Natural killer cell (primary cell): ENCODE measurements at regions of chr6 and their contacts with region 1.

Region 1: DNA sequence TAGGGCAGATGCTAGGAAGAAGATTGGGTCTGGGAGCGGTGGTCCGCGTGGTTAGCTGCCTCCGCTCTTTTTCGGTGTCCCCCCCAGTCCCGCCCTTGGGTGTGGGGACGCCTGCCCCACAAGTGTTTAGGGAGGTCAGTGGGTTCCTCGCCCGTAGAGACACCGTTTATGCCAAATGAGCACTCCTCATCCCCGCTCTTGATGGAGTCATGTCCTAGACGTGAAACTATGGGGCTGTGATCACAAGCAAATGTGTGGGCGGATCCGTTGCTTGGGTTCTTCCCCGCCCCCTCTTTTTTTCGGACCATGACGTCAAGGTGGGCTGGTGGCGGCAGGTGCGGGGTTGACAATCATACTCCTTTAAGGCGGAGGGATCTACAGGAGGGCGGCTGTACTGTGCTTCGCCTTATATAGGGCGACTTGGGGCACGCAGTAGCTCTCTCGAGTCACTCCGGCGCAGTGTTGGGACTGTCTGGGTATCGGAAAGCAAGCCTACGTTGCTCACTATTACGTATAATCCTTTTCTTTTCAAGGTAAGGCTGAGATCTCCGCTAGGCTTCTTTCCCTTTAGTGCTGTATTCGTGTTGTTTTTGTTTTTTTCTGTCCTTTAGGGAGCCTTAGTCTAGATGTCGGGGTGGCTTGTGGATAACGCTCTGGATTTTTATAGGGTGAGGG is at the start of gene HSP90AB1:
- DNase-seq: peak; percentile 90 to 98
- ATAC-seq: peak; percentile 76 to 93 (median 81)
- H3K4me3 ChIP-seq: peak within 1 kb of the TSS; percentile 97
- H3K4me3 Mint-ChIP-seq: peak within 1 kb of the TSS; percentile 100
- H3K27ac ChIP-seq: peak within 1 kb of the TSS; percentile 98
- H3K27ac Mint-ChIP-seq: peak within 1 kb of the TSS; percentile 99
- H3K4me1 ChIP-seq: peaks cover 23% of the 10 kb centered on the region
- H3K4me1 Mint-ChIP-seq: peaks cover 38 to 46% of the 10 kb centered on the region in 2 donors
- H3K27me3 ChIP-seq: no peaks in the 10 kb centered on the region
- H3K27me3 Mint-ChIP-seq: no peaks in the 10 kb centered on the region
- CTCF ChIP-seq: no peak
- total RNA-seq, gene HSP90AB1: 256 to 372 (median 308) TPM

Region 2: DNA sequence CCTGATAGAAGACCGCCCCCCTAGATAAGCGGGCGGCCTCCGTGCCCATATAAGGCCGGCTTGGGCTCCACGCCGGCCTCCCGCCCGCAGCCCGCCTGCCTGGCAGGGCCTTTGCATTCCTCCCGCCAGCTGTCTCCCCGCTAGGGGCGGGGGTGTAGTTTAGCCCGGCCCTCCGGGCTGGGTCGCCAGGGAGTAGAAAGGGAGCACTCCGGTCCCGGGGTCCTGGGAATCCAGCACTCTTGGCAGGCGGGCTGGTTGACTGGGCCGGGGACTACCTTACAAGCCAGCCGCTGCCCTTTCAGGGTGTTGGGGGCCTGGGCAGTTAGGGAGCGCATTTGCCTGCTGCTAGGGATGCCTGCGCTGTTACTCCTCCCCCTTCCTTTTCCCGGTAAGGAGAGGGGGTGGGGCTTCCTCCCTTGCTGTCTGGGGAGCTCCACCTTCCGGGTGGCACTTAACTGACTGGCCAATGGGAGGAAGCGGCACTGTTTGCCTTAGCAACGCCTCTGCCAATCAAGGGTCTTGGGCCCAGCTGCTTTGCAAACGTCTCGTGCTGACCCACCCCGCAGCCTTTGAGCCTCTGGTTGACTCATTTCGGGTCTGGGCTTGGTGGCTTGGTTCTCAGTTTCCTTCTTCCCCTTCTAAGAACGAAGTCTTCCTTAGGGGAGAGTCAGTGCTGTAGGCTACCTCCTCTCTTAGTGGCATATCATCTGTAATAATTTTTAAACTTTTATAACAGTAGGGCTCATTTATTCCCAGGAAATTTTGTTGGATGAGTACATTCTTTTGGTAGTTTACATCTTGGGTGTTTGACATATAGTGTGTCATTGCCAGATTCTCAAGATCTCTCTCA is 1072.3 kb before region 1 on chr6:
- intact Hi-C with region 1: loop called (anchors 5 kb)
- DNase-seq: peak; percentile 83 to 97
- ATAC-seq: peak; percentile 61 to 74 (median 67)
- H3K4me3 ChIP-seq: peak overlapping the region; percentile 6
- H3K4me3 Mint-ChIP-seq: peak overlapping the region; percentile 64
- H3K27ac ChIP-seq: peak overlapping the region; percentile 83
- H3K27ac Mint-ChIP-seq: peak overlapping the region; percentile 94 to 96
- H3K4me1 ChIP-seq: peaks cover 50% of the 10 kb centered on the region
- H3K4me1 Mint-ChIP-seq: peaks cover 33 to 52% of the 10 kb centered on the region in 2 donors
- H3K27me3 ChIP-seq: no peaks in the 10 kb centered on the region
- H3K27me3 Mint-ChIP-seq: no peaks in the 10 kb centered on the region
- CTCF ChIP-seq: no peak

Region 3: DNA sequence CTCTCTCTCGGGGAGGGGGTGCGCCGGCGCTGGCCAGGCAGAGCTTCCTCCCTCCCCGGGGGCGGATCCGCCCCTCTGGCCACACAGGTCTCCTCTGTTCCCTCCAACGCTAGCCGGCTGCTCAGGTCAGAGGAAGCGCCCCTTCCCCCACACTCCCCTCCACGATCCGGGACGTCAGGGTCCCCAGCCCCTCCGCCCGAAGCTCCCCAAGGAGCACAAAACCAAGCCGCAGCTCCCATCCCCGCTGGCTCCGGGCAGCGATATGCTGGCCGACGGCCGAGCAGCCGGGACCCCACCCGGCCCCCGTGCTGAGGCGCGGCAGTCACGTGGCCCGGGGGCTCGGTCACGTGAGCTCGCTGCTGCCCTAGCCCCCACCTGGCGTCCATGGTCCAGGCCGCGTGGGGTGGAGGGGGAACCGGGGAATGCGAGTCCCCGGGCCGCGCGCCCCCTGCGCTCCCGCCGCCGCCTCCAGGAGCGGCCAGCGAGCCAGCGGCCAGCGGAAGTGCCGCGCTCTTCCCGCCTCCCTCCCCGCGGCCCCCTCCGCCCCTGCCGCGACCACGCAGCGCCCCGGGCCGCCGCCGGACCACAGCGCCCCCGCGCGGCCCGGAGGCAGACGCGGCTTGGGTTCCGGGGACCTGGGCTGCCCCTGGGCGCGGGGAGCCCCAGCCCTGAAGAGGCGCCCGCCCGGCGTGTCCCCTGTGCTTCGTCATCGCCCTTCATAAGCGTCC is 10.4 kb after region 1 on chr6 and contains the start of gene SLC35B2:
- intact Hi-C with region 1: loop called (anchors 1 kb)
- DNase-seq: peak; percentile 76 to 86
- ATAC-seq: peak; percentile 80 to 92 (median 86)
- H3K4me3 ChIP-seq: peak within 1 kb of the TSS; percentile 71
- H3K4me3 Mint-ChIP-seq: peak within 1 kb of the TSS; percentile 92
- H3K27ac ChIP-seq: peak within 1 kb of the TSS; percentile 79
- H3K27ac Mint-ChIP-seq: peak within 1 kb of the TSS; percentile 90 to 97
- H3K4me1 ChIP-seq: peaks cover 32% of the 10 kb centered on the region
- H3K4me1 Mint-ChIP-seq: peaks cover 45 to 64% of the 10 kb centered on the region in 2 donors
- H3K27me3 ChIP-seq: no peaks in the 10 kb centered on the region
- H3K27me3 Mint-ChIP-seq: no peaks in the 10 kb centered on the region
- CTCF ChIP-seq: peak; percentile 66
- total RNA-seq, gene SLC35B2: 20.9 to 27.7 (median 26.8) TPM

Region 4: GRCh38 chr6:44265007-44265721 is 18.4 kb after region 1 on chr6 and contains the start of gene NFKBIE:
- intact Hi-C with region 1: loop called (anchors 1 kb)
- DNase-seq: peak; percentile 96 to 98
- ATAC-seq: peak; percentile 81 to 95 (median 86)
- H3K4me3 ChIP-seq: peak within 1 kb of the TSS; percentile 94
- H3K4me3 Mint-ChIP-seq: peak within 1 kb of the TSS; percentile 93
- H3K27ac ChIP-seq: peak within 1 kb of the TSS; percentile 92
- H3K27ac Mint-ChIP-seq: peak within 1 kb of the TSS; percentile 93 to 98
- H3K4me1 ChIP-seq: peaks cover 50% of the 10 kb centered on the region
- H3K4me1 Mint-ChIP-seq: peaks cover 19 to 49% of the 10 kb centered on the region in 2 donors
- H3K27me3 ChIP-seq: peaks cover 17% of the 10 kb centered on the region
- H3K27me3 Mint-ChIP-seq: peaks cover 11 to 15% of the 10 kb centered on the region in 2 donors
- CTCF ChIP-seq: peak; percentile 28
- total RNA-seq, gene NFKBIE: 44.9 to 61.5 (median 56.4) TPM